ENCODE measurements at regions of chr10 and their contacts with region 1.

Region 1: DNA sequence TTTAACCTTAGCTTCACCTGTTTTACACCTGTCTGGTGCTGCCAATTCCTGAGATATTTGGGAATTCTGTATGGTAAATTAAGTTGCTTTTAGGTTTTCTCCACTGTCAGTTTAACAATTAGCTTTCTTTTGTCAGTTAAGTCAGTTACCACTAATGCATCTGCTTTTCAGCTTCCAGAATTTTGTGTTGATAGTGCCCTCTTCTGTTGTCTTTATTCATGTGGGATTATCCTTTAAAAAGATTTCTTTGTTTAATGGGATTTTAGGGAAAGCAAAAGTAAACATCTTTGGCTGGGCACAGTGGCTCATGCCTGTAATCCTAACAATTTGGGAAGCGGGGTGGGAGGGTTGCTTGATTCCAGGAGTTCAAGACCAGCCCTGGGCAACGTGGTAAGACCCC is 8.1 kb downstream of the TFAM start:
- DNase-seq: no peak
- ATAC-seq: no peak
- H3K4me3 ChIP-seq: no peak overlapping the region
- H3K27ac ChIP-seq: no peak overlapping the region
- H3K4me1 ChIP-seq: no peaks in the 10 kb centered on the region
- H3K27me3 ChIP-seq: no peaks in the 10 kb centered on the region
- CTCF ChIP-seq: peak in 2 of 9 donors; percentile 10 to 14

Region 2: DNA sequence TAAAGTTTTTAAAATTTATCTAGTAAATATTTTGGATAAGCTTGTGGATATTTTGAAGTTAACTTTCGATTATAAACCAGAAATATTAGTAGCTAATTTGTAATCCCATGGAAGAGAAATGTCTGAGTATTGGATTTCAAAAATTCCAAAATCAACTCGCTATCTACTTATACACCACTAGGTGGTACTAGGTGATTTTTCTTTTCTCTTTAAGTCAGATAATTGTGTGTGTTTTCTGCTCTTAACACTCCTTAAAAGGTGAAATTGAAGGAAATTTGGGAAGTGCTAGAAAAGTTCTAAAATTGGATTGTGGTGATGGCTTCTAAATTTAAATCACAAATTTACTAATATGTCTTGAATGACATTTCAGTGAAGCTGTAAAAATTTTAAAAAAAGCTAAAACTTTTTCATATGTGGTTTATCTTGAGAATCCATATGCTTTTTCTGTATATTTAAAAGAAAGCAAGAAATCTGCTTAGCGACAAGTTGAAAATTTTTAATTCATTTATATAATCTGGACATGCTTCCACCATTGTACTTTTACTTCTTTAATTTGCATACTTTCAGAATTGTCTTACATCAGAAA is 215.9 kb before region 1 on chr10:
- intact Hi-C with region 1: loop called in 4 of 10 experiments (anchors 5 to 10 kb)
- DNase-seq: no peak
- ATAC-seq: no peak
- H3K4me3 ChIP-seq: no peak overlapping the region
- H3K27ac ChIP-seq: no peak overlapping the region
- H3K4me1 ChIP-seq: no peaks in the 10 kb centered on the region
- H3K27me3 ChIP-seq: no peaks in the 10 kb centered on the region
- CTCF ChIP-seq: peak; percentile 40 to 77 (median 70)

Region 3: DNA sequence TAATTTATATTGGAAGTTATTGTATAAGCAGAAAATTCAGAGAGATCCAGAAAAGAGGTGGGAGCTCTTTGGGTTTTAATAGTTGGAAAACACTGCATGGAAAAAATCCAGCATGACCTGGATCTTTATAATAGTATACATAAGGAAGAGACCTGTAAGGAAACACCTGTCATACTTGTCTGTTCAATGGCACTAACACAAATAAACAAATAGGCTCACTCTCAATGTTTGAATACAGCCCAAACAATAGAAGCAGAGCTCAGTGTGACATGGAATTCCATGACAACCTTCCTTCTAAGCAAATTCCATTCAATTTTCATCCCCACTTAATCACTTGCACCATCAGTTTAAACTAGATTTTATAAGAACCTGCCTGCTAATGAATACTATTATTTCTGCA is 92.6 kb before region 1 on chr10:
- intact Hi-C with region 1: loop called in 3 of 10 experiments (anchors 5 to 10 kb)
- DNase-seq: no peak
- ATAC-seq: no peak
- H3K4me3 ChIP-seq: no peak overlapping the region
- H3K27ac ChIP-seq: no peak overlapping the region
- H3K4me1 ChIP-seq: peaks cover 0 to 5% (median 0%) of the 10 kb centered on the region in 9 donors
- H3K27me3 ChIP-seq: peaks cover 0 to 28% (median 0%) of the 10 kb centered on the region in 7 donors
- CTCF ChIP-seq: no peak